ENCODE measurements at regions of chr14 and their contacts with region 1.

Region 1: GRCh38 chr14:74945823-74946682 is 9.3 kb downstream of the PGF start:
- DNase-seq: peak; percentile 79
- H3K4me3 ChIP-seq: peak overlapping the region; percentile 13
- H3K27ac ChIP-seq: peak overlapping the region; percentile 42
- H3K4me1 ChIP-seq: peaks cover 57% of the 10 kb centered on the region
- H3K27me3 ChIP-seq: no peaks in the 10 kb centered on the region
- CTCF ChIP-seq: peak; percentile 96

Region 2: DNA sequence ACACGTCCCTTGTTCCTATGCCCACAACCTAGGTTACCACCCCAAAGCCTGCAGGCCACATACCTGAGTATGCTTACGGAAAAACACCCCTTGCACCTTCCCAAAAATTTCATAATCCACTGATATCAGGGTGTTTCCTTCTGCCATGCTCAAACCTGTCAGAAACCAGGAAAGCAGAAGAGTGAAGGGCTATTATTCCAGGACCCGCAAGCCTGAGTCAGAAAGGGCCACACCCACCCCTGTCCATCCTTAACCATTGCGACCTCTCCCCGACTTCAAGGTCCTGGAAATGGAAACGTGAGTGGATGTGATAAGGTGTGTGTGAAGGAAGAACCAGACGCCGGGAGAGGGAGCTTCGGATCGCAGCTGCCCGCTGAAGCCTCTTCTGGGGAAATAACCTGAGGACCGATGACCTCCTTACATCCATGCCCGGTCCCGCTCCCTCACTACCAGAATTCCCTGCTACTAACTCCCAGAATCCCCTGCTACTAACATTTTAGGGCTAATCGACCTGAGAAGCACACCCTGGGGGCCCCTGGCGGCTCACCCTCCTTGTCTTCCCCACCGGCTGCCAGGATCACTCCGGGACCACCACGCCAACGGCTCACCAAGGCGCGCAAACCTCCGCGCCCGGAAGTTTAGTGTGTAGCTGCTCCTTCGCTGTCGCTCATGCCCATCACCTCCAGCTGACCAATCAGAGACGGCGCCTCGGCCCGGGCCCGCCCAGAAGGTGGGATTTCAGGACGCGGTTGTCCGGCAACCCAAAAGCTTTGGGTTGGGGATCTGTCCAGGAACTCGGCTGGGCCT is 117.6 kb after region 1 on chr14 and contains the start of gene ACYP1:
- intact Hi-C with region 1: loop called (anchors 10 kb)
- DNase-seq: peak; percentile 93
- H3K4me3 ChIP-seq: peak within 1 kb of the TSS; percentile 91
- H3K27ac ChIP-seq: peak within 1 kb of the TSS; percentile 81
- H3K4me1 ChIP-seq: peaks cover 42% of the 10 kb centered on the region
- H3K27me3 ChIP-seq: no peaks in the 10 kb centered on the region
- CTCF ChIP-seq: no peak
- total RNA-seq, gene ACYP1: 14.0 TPM